Heart left ventricle (tissue), 16 donors: ENCODE measurements at regions of chr15 and their contacts with region 1.

Region 1: DNA sequence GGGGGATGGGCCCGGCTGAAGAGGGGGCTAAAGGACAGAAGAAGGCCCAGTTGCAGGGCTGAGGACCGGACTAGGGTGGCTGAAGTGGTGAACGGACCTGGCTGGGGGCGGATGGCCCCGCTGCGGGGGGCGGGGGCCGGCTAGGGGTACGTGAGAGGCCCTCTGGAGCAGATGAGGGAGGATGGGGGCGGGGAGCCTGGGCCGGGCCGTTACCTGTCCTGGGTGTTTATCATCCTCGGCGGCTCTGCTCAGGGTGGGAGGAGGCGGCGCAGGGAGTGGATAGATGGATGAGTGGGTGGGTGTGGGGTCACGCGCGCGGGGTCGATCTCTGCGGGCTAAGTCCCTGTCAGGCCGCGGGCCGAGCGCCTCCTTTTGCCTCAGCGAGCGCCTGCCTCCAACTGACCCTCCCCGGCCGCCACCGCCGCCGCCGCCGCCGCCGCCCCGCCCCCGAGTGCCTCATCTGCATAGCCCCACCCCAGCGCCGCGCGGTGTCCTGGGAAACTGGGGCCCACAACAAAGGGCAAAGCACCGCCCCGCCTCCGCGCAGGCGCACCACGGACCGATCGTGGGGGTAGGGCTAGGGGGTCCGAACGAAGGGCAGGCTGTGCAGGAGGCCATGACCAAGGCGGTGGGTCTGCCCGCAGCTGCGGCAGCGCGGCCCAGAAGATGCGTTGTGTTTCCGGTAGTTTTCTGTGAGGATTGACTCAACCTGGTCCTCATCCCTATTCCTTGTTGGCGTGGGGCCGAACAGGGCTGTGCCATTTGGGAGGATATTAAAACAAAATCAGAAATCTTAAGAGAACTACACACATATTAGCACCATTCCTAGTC is 72.4 kb downstream of the RBPMS2 start:
- DNase-seq: peak; percentile 97 to 100 (median 99)
- ATAC-seq: peak; percentile 94 to 97 (median 95)
- H3K4me3 ChIP-seq: peak overlapping the region; percentile 64 to 99 (median 92)
- H3K27ac ChIP-seq: peak overlapping the region; percentile 49 to 95 (median 86)
- H3K4me1 ChIP-seq: peaks cover 13 to 55% (median 46%) of the 10 kb centered on the region in 12 donors
- H3K27me3 ChIP-seq: no peaks in the 10 kb centered on the region
- CTCF ChIP-seq: peak in 1 of 12 donors; percentile 7
- POLR2A ChIP-seq: peak in 1 of 2 donors; percentile 66

Region 2: GRCh38 chr15:64717735-64718495 is 14.9 kb after region 1 on chr15:
- intact Hi-C with region 1: loop called in 1 of 10 experiments (anchors 1 kb)
- DNase-seq: peak in 2 of 5 donors; percentile 62 to 68
- ATAC-seq: peak in 3 of 4 donors; percentile 53 to 72 (median 61)
- H3K4me3 ChIP-seq: peak overlapping the region in 9 of 12 donors; percentile 18 to 47 (median 33)
- H3K27ac ChIP-seq: peak overlapping the region; percentile 68 to 96 (median 86)
- H3K4me1 ChIP-seq: peaks cover 0 to 43% (median 22%) of the 10 kb centered on the region in 12 donors
- H3K27me3 ChIP-seq: no peaks in the 10 kb centered on the region
- CTCF ChIP-seq: no peak
- POLR2A ChIP-seq: no peak